ENCODE measurements at regions of chrX and their contacts with region 1.

Region 1: GRCh38 chrX:49043220-49043986 is at the start of gene TFE3:
- DNase-seq: peak; percentile 97 to 99
- ATAC-seq: peak; percentile 86 to 89 (median 88)
- H3K4me3 ChIP-seq: peak within 1 kb of the TSS; percentile 85
- H3K27ac ChIP-seq: peak within 1 kb of the TSS; percentile 96
- H3K4me1 ChIP-seq: peaks cover 2% of the 10 kb centered on the region
- H3K27me3 ChIP-seq: no peaks in the 10 kb centered on the region
- CTCF ChIP-seq: peak; percentile 48
- total RNA-seq, gene TFE3: 18.1 to 46.5 (median 30.4) TPM

Region 2: GRCh38 chrX:48972220-48973167 is 70.9 kb before region 1 on chrX:
- intact Hi-C with region 1: loop called in 1 of 2 experiments (anchors 10 kb)
- DNase-seq: peak in 1 of 2 donors; percentile 27
- ATAC-seq: peak; percentile 58 to 83 (median 70)
- H3K4me3 ChIP-seq: peak overlapping the region; percentile 50
- H3K27ac ChIP-seq: no peak overlapping the region
- H3K4me1 ChIP-seq: no peaks in the 10 kb centered on the region
- H3K27me3 ChIP-seq: peaks cover 0 to 19% (median 0%) of the 10 kb centered on the region in 3 donors
- CTCF ChIP-seq: peak; percentile 45

Region 3: GRCh38 chrX:49002091-49002935 is 41.1 kb before region 1 on chrX and contains the start of gene GRIPAP1:
- intact Hi-C with region 1: loop called (anchors 5 kb)
- DNase-seq: peak; percentile 61 to 84
- ATAC-seq: peak; percentile 90 to 97 (median 94)
- H3K4me3 ChIP-seq: peak within 1 kb of the TSS; percentile 79
- H3K27ac ChIP-seq: peak within 1 kb of the TSS; percentile 81
- H3K4me1 ChIP-seq: no peaks in the 10 kb centered on the region
- H3K27me3 ChIP-seq: no peaks in the 10 kb centered on the region
- CTCF ChIP-seq: no peak
- total RNA-seq, gene GRIPAP1: 16.5 to 23.6 (median 19.4) TPM

Region 4: GRCh38 chrX:49089336-49089952 is 46.0 kb after region 1 on chrX:
- intact Hi-C with region 1: no loop called
- DNase-seq: no peak
- ATAC-seq: no peak
- H3K4me3 ChIP-seq: no peak overlapping the region
- H3K27ac ChIP-seq: no peak overlapping the region
- H3K4me1 ChIP-seq: no peaks in the 10 kb centered on the region
- H3K27me3 ChIP-seq: no peaks in the 10 kb centered on the region
- CTCF ChIP-seq: no peak